Activated naive CD4-positive, alpha-beta T cell treated with anti-CD3 and anti-CD28 coated beads for 36 hours (primary cell): ENCODE measurements at regions of chr12 and their contacts with region 1.

Region 1: DNA sequence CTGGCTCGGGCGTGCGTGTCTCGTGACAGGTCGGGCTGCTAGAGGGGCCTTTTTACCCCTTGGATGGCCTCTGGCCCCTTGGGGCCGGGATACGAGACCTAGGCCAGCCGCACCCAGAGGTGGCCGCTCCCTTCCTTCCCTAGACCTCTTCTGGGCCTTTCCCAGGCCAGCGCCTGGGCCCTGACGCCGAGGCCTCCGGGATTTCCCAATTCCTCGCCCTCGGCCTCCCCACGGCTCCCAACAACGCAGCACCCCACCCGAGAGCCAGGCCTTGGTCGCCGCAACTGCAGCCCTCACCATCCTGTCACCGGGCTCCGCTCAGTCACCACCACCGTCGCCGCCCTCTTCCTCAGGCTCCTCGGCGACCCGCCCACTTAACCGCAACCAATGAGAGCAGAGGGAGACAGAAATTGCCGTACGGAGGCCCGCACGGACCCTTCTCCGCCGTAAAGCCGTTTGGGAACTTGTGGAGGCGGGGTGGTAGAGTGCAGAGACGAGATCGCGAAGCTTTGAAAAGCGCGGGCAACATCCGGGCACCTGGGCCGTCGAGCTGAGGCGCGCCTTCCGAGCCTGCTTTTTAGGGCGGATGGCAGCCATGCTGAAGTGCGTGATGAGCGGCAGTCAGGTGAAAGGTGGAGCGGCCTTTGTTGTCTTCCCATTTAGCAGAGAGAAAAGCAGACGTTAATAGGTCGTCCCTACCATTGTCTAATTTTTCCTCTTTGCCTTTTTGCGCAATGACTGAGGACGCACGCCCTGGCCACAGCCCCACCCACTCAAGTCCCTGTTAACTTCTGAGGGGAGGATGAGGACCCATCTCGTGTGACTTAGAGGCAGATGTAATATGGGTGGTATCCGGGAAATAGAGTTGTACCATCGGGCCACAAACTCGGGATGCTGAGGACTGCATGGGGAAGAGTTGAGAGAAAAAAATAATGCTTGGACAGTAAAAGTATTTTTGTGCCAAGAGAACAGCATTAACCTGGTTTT is at the starts of genes RAD9B and VPS29:
- DNase-seq: peak; percentile 100
- H3K4me3 Mint-ChIP-seq: peak within 1 kb of the TSS; percentile 94
- H3K27ac Mint-ChIP-seq: peak within 1 kb of the TSS; percentile 96
- H3K4me1 Mint-ChIP-seq: peaks cover 32% of the 10 kb centered on the region
- H3K27me3 Mint-ChIP-seq: no peaks in the 10 kb centered on the region
- total RNA-seq, gene RAD9B: 1.1 to 1.5 TPM
- total RNA-seq, gene VPS29: 76.6 to 81.8 TPM

Region 2: GRCh38 chr12:110403146-110403975 is 98.7 kb before region 1 on chr12 and contains the start of gene ANAPC7:
- CTCF ChIA-PET with region 1: interaction called, 3 read pairs
- intact Hi-C with region 1: loop called (anchors 1 kb)
- DNase-seq: peak; percentile 92
- H3K4me3 Mint-ChIP-seq: peak within 1 kb of the TSS; percentile 98
- H3K27ac Mint-ChIP-seq: peak within 1 kb of the TSS; percentile 99
- H3K4me1 Mint-ChIP-seq: peaks cover 27% of the 10 kb centered on the region
- H3K27me3 Mint-ChIP-seq: no peaks in the 10 kb centered on the region
- total RNA-seq, gene ANAPC7: 51.2 to 61.2 TPM

Region 3: DNA sequence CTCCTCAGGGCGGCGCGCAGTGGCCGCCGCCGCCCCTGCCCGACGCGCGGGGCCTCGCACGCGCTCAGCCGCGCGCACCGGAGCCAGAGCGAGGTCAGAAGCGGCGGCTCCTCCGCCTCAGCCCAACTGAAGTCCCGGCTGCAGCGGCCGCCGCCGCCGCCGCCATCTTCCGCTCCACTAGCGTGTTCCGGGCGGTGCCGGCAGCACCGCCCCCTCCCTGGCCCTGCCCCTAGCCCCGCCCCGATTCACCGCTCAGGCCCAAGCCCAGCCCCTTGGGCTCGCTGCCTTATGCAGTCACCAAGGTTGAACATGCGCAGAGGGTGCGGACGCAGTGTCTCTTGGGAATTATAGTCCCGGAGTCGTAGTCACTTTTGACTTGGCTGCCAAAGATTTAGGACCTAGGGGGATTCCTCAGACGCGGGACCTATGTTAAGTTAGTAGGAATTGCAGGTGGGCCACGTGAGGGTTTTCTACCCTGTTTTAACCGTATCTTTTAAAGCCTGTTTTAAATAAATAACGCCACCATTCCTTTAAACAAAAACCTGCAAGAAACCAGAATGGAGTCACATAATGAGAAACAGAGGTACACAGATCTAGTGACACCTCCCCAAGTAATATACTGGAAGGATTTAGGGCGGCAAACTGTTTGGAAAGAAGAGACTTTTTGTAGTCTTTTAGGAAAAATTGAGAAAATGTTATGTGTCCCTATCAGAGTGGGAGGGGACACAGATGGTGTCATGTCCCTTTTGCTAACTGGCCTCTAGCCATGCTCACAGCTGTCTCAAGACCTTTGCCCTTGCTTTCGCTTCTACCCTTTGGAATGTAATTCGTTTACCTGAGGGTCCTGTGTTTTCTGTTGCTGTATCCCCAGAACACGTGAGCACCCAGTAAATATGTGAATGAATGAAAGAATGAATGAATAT is 81.4 kb after region 1 on chr12 and contains the start of gene PPTC7:
- CTCF ChIA-PET with region 1: no interaction called
- intact Hi-C with region 1: loop called (anchors 1 kb)
- DNase-seq: peak; percentile 99
- H3K4me3 Mint-ChIP-seq: peak within 1 kb of the TSS; percentile 90
- H3K27ac Mint-ChIP-seq: peak within 1 kb of the TSS; percentile 98
- H3K4me1 Mint-ChIP-seq: peaks cover 59% of the 10 kb centered on the region
- H3K27me3 Mint-ChIP-seq: no peaks in the 10 kb centered on the region
- total RNA-seq, gene PPTC7: 41.1 to 43.2 TPM

Region 4: DNA sequence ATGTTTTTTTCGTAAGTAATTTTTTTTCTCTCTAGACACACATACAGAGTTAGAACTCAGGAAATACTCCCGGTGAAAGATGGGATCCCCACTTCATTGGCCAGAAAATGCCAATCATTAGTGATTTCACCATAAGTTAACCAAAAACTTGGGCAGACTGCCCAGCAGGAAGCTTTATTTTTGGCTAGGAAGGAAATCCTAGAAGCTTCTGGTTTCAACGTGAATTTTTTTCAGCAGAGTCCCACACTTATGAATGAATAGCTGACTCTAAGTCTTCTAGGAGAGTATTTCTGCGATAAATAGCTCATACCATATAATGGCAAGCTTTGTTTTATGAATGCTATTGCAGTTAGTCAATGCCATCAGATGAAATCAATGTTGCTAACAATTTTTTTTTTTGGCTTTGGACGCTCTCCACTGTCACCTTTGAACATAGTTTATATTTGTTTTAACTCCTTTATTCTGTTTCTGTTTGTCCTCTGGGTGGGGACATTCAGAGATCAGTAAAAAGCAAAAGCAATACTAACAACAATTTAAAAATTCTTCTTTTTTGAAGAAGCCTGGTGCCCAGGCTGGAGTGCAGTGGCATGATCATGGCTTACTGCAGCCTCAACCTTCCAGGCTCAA is 231.2 kb after region 1 on chr12:
- CTCF ChIA-PET with region 1: no interaction called
- intact Hi-C with region 1: no loop called
- DNase-seq: no peak
- H3K4me3 Mint-ChIP-seq: no peak overlapping the region
- H3K27ac Mint-ChIP-seq: peak overlapping the region; percentile 61
- H3K4me1 Mint-ChIP-seq: peaks cover 82% of the 10 kb centered on the region
- H3K27me3 Mint-ChIP-seq: no peaks in the 10 kb centered on the region